Calu3 (cell line): ENCODE measurements at regions of chr10 and their contacts with region 1.

Region 1: GRCh38 chr10:66836057-66836456 is 89.8 kb upstream of the LRRTM3 start:
- DNase-seq: peak; percentile 58
- H3K4me3 Mint-ChIP-seq: no peak overlapping the region
- H3K27ac Mint-ChIP-seq: peak overlapping the region; percentile 13
- H3K4me1 Mint-ChIP-seq: peaks cover 55% of the 10 kb centered on the region
- H3K27me3 Mint-ChIP-seq: no peaks in the 10 kb centered on the region
- CTCF ChIP-seq: no peak

Region 2: DNA sequence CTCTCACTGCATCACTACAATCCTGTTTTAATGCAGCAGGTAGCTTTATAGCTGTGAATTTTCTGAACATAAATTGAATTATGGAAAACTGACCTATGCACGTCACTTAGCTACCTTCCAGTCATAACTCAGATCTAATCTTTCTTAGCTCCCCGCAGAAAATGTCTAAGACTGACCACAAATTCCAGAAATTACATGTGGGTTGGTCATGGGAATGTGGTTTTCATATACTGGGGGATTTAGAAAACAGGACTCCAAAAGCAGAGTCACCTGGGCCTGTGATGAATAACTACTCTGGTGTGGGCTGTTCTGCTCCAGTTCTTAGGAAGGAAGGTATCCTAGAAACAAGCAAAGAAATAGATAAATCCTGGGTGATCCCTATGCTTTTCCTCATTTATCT is 88.6 kb before region 1 on chr10:
- CTCF ChIA-PET with region 1: interaction called, 3 read pairs
- intact Hi-C with region 1: loop called (anchors 5 kb)
- DNase-seq: peak; percentile 31
- H3K4me3 Mint-ChIP-seq: no peak overlapping the region
- H3K27ac Mint-ChIP-seq: peak overlapping the region; percentile 34
- H3K4me1 Mint-ChIP-seq: peaks cover 19% of the 10 kb centered on the region
- H3K27me3 Mint-ChIP-seq: no peaks in the 10 kb centered on the region
- CTCF ChIP-seq: no peak

Region 3: GRCh38 chr10:66804962-66805361 is 31.1 kb before region 1 on chr10:
- CTCF ChIA-PET with region 1: interaction called, 5 read pairs
- intact Hi-C with region 1: loop called (anchors 1 kb)
- DNase-seq: no peak
- H3K4me3 Mint-ChIP-seq: no peak overlapping the region
- H3K27ac Mint-ChIP-seq: no peak overlapping the region
- H3K4me1 Mint-ChIP-seq: peaks cover 23% of the 10 kb centered on the region
- H3K27me3 Mint-ChIP-seq: no peaks in the 10 kb centered on the region
- CTCF ChIP-seq: no peak

Region 4: GRCh38 chr10:67151471-67151870 is 315.4 kb after region 1 on chr10:
- CTCF ChIA-PET with region 1: no interaction called
- intact Hi-C with region 1: no loop called
- DNase-seq: no peak
- H3K4me3 Mint-ChIP-seq: no peak overlapping the region
- H3K27ac Mint-ChIP-seq: no peak overlapping the region
- H3K4me1 Mint-ChIP-seq: no peaks in the 10 kb centered on the region
- H3K27me3 Mint-ChIP-seq: no peaks in the 10 kb centered on the region
- CTCF ChIP-seq: no peak